ENCODE measurements at regions of chr2 and their contacts with region 1.

Region 1: GRCh38 chr2:55617175-55618024 is at the start of gene PPP4R3B:
- DNase-seq: peak; percentile 99
- H3K4me3 Mint-ChIP-seq: no peak within 1 kb of the TSS
- H3K27ac Mint-ChIP-seq: no peak within 1 kb of the TSS
- H3K4me1 Mint-ChIP-seq: peaks cover 47% of the 10 kb centered on the region
- H3K27me3 Mint-ChIP-seq: no peaks in the 10 kb centered on the region
- total RNA-seq, gene PPP4R3B: 62.4 to 65.1 TPM

Region 2: DNA sequence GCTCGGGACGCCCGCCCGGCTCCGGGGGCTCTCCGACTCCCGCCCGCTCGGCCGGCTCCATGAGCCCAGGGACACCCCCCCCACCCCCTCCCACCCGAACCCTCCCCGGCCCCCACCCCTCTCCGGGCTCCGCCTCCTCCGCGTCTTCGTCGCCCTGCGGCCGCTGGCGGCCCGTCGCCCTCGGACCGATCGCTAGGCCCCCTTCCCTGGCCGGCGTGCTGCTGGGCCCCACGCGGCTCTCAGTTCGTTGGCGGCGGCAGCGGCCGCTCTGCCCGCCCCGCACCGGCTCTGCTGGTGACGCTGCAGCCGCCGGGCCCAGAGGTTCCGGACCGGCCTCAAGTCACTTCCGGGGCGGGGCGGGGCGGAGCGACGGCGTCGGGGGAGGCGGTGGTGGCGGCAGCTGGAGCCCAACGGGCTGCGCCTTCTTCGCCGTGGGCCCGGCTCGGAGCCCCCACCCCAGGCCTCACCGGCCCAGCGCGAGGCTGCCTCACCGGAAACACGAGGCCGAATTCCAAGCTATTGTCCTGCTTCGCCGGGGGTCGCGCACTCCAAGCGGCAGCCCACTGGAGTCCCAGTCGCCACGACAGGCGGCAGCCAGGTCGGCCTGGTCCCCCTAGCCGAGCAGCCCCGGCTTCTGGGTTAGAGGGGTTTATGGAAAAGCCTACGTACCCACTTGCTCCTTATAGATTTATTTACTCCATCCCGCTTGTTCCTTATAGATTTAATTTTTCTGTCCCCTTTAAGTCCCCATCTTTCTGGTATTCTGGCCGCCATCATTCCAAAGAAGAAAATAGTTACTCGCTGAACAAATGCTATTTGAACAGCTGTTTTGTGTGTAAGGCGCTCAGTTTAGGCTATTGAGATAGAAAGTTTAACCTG is 1646.4 kb before region 1 on chr2 and contains the start of gene PSME4:
- CTCF ChIA-PET with region 1: no interaction called
- POLR2A ChIA-PET with region 1: no interaction called
- intact Hi-C with region 1: loop called (anchors 10 kb)
- DNase-seq: peak; percentile 95
- H3K4me3 Mint-ChIP-seq: peak within 1 kb of the TSS; percentile 80
- H3K27ac Mint-ChIP-seq: peak within 1 kb of the TSS; percentile 85
- H3K4me1 Mint-ChIP-seq: peaks cover 37% of the 10 kb centered on the region
- H3K27me3 Mint-ChIP-seq: no peaks in the 10 kb centered on the region
- total RNA-seq, gene PSME4: 35.2 to 36.9 TPM

Region 3: DNA sequence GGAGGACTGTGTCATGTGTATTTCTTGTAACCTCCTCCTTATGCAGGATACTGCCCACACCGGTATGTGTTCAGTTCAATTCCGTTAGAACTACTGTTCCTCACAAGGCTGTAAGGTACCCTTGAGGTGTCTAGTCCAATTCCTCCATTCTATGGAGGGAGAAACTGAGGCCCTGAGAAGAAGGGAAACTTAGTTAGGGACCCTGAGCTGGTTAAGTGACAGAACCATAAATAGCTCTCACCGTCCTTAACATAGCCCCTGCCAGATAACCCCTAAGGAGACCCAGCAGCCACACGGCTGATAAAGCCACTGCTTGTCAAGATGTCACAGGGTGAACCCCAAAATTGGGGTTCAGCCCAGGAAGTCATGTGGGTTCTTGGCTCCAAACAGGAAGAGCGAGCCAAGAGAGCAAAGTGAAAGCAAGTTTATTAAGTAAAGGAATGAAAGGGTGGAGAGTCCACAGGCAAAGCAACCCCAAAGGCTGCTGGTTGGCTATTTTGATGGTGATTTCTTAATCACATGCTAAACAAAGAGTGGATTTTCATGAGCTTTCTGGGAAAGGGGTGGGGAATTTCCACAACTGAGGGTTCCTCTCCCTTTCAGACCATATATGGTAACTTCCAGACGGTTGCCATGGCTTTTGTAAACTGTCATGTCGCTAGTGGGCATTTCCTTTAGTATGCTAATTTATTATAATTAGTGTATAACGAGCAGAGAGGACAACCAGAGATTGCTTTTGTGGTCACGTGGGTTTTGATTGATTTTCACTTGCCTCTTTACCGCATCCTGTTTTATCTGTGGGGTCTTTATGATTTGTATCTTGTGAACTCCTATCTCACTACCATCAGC is 483.7 kb before region 1 on chr2:
- CTCF ChIA-PET with region 1: no interaction called
- POLR2A ChIA-PET with region 1: no interaction called
- intact Hi-C with region 1: loop called (anchors 5 kb)
- DNase-seq: peak; percentile 63
- H3K4me3 Mint-ChIP-seq: peak overlapping the region; percentile 69
- H3K27ac Mint-ChIP-seq: peak overlapping the region; percentile 96
- H3K4me1 Mint-ChIP-seq: peaks cover 17% of the 10 kb centered on the region
- H3K27me3 Mint-ChIP-seq: no peaks in the 10 kb centered on the region

Region 4: GRCh38 chr2:55311444-55311870 is 305.9 kb before region 1 on chr2:
- CTCF ChIA-PET with region 1: no interaction called
- POLR2A ChIA-PET with region 1: no interaction called
- intact Hi-C with region 1: loop called (anchors 1 kb)
- DNase-seq: peak; percentile 65
- H3K4me3 Mint-ChIP-seq: no peak overlapping the region
- H3K27ac Mint-ChIP-seq: no peak overlapping the region
- H3K4me1 Mint-ChIP-seq: peaks cover 22% of the 10 kb centered on the region
- H3K27me3 Mint-ChIP-seq: no peaks in the 10 kb centered on the region

Region 5: GRCh38 chr2:55530539-55531081 is 86.8 kb before region 1 on chr2:
- CTCF ChIA-PET with region 1: no interaction called
- POLR2A ChIA-PET with region 1: no interaction called
- intact Hi-C with region 1: loop called (anchors 1 kb)
- DNase-seq: peak; percentile 30
- H3K4me3 Mint-ChIP-seq: peak overlapping the region; percentile 1
- H3K27ac Mint-ChIP-seq: peak overlapping the region; percentile 83
- H3K4me1 Mint-ChIP-seq: peaks cover 22% of the 10 kb centered on the region
- H3K27me3 Mint-ChIP-seq: no peaks in the 10 kb centered on the region

Region 6: GRCh38 chr2:55693181-55694134 is 76.1 kb after region 1 on chr2 and contains the start of gene PNPT1:
- CTCF ChIA-PET with region 1: no interaction called
- POLR2A ChIA-PET with region 1: no interaction called
- intact Hi-C with region 1: loop called (anchors 1 kb)
- DNase-seq: peak; percentile 97
- H3K4me3 Mint-ChIP-seq: peak within 1 kb of the TSS; percentile 98
- H3K27ac Mint-ChIP-seq: peak within 1 kb of the TSS; percentile 90
- H3K4me1 Mint-ChIP-seq: peaks cover 35% of the 10 kb centered on the region
- H3K27me3 Mint-ChIP-seq: no peaks in the 10 kb centered on the region
- total RNA-seq, gene PNPT1: 44.0 to 48.4 TPM